ENCODE measurements at regions of chr15 and their contacts with region 1.

Region 1: DNA sequence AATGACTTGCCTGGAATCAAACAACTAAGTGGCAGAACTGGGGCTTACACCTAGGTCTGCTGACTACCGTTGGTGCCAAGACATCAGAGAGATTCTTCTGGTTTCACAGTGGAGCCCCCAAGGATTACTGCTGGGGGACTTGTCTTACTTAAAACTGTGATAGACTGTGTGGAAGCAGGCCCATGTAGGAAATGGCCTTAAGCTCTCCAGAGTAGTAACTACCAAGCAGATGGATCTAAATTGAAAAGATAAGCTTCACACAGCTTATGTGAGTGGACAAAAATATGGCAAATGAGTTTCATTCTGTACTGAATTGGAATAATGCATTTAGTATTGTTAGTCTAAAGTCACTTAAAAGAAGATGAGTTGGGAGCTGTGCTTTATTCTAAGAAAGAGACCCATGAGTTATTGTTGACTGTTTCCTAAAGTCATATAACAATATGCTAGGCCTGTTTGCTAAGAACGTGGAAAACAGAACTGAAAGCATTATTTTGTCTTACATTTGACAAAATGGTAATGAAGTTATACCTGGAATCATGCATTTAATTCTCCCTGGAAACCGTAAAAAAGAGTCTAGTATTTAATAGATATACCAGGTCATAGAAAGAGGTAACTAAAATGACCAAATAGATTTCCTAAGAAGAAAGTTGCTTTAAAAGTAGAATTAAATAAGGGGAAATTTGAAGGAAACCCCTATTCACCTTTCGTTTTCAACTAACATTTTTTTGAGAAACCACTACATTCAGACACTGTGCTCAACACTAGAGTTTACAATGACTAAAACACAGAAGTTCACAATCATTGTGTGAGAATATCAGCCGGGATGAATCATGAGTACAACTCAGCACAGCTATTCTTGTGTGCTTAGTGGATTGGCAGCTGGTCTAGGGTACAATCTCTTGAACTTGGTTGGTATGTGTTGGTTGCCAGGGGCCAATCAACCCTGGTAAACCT is 13.0 kb upstream of the MAPK6 start:
- DNase-seq: peak; percentile 58
- H3K4me3 Mint-ChIP-seq: no peak overlapping the region
- H3K27ac Mint-ChIP-seq: peak overlapping the region; percentile 30
- H3K4me1 Mint-ChIP-seq: peaks cover 50% of the 10 kb centered on the region
- H3K27me3 Mint-ChIP-seq: peaks cover 6% of the 10 kb centered on the region

Region 2: DNA sequence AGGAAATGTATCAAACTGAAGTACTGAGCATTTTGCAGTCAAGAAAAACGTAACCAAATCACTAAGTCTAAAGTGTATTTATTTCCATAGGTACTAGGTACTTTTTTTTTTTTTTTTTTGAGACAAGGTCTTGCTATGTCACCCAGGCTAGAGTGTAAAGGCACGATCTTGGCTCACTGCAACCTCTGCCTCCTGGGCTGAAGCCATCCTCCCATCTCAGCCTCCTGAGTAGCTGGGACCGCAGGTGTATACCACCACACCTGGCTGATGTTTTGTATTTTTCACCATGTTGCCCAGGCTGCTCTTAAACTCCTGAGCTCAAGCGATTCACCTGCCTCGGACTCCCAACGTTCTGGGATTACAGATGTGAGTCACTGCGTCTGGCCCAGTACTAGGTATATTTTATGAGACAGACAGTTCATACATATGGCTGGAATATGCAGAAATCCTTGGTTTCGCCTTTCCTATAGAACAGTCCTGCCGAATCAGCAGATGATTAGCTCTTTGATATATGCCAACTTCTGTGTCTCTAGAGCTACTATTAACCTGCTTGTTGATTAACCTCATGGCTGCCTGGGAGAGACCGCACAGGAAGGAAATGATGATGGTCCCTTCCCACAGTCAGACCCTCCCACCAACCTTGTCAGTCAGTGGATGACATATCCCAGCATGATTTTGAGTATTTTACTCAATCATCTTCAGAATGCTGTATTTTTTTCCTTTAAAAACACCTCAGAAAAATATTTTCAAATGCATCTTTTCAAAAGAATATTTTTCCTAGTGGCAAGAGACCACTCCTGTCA is 144.3 kb before region 1 on chr15:
- CTCF ChIA-PET with region 1: no interaction called
- intact Hi-C with region 1: loop called (anchors 5 kb)
- DNase-seq: peak; percentile 79
- H3K4me3 Mint-ChIP-seq: no peak overlapping the region
- H3K27ac Mint-ChIP-seq: peak overlapping the region; percentile 47
- H3K4me1 Mint-ChIP-seq: peaks cover 68% of the 10 kb centered on the region
- H3K27me3 Mint-ChIP-seq: no peaks in the 10 kb centered on the region

Region 3: DNA sequence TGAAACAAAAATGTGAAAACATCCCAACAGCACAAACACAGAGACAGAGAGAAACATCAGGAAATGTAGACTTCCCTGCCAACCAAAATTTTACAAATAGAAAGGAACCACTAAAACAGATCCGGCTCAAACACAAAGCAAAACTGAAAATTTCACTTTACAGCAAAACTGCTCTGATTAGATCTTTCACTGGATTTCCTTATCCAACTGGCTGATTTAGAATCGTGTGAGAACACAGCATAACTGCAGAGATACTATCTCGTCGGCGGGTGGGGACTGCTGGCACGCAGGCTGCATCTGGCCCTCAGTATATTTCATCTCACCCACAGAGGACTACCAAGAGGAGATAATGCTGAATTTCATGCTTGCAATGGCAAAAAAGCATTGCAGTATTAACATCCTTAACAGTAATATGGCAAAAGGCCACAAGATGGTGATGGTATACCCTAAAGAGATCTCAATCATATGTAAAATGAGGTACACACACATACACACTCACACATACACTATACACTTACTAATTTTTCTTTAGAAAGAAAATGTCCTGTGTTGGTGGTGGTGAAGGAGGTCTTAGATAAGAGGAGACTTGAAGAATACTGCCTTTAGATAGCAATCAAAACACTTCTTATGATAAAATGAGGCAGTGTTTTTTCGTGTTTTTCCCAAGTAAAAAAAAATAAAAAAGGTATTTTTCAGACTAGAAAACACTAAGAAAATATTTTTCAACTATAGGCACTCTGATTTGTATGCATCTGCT is 23.8 kb before region 1 on chr15:
- CTCF ChIA-PET with region 1: no interaction called
- intact Hi-C with region 1: loop called (anchors 1 kb)
- DNase-seq: peak; percentile 52
- H3K4me3 Mint-ChIP-seq: peak overlapping the region; percentile 62
- H3K27ac Mint-ChIP-seq: peak overlapping the region; percentile 25
- H3K4me1 Mint-ChIP-seq: peaks cover 10% of the 10 kb centered on the region
- H3K27me3 Mint-ChIP-seq: no peaks in the 10 kb centered on the region

Region 4: DNA sequence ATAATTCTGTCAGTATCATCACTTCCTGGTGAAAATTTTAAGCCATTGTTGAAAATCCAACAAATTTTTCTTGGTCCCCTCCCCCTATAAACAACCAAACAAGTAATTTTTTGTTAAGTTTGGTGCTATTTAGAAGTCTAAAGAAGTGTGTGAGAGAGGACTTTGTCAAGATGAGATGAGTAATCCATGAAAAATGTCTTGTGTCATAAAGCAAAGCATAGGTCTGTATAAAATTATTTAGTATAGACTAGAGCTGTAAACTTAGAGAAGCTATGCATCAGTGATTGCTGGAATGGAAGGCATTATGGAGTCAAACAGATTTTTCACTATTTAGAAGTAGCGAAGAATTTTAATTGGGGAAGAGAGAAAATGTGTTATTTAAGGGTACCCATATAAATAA is 44.4 kb after region 1 on chr15:
- CTCF ChIA-PET with region 1: interaction called, 5 read pairs
- intact Hi-C with region 1: loop called (anchors 1 kb)
- DNase-seq: no peak
- H3K4me3 Mint-ChIP-seq: no peak overlapping the region
- H3K27ac Mint-ChIP-seq: no peak overlapping the region
- H3K4me1 Mint-ChIP-seq: peaks cover 15% of the 10 kb centered on the region
- H3K27me3 Mint-ChIP-seq: no peaks in the 10 kb centered on the region

Region 5: DNA sequence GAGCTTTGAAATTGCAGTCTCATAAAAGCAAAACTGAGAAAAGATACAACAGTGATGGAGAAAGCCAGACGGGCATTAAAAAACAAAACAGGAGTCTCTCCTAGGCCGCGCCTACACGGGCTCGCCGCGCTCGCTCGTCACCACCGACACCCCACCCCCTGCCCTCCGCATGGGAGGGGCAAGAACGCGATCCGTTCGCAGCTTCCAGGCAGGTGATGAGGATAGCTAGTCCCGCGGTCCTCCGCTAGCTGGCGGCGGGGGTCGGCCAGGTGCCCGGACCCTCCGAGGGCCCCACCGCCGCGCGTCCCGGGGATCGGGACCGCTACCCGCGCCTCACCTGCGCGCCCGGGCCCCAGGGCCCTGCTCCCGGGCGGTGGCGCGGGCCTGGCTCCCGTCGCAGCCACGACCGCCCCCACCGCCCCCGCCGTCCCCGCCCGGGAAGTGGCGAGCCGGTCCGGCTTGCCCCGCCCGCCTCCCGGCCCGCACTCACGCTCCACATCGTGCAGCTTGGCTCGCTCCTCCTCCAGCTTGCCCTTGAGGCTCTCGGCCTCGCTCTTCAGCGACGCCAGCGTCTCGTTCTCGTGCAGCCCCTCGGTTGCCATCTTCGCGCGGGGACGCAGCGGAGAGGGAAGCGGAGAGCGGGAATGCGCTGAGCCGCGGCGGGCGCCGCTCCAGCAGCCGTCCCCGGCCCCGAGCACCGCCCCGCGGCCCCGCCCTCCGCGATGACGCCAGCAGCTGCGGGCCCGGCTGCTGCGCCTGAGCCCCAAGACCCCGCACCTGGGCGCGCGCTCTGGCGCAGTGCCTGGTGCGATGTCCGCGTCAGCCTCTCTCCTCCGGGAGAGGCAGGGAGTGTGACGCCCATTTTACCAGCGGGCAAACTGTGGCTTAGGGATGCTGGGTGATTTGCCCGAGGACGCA is 173.5 kb after region 1 on chr15:
- CTCF ChIA-PET with region 1: no interaction called
- intact Hi-C with region 1: loop called (anchors 2 kb)
- DNase-seq: peak; percentile 91
- H3K4me3 Mint-ChIP-seq: peak overlapping the region; percentile 87
- H3K27ac Mint-ChIP-seq: peak overlapping the region; percentile 92
- H3K4me1 Mint-ChIP-seq: peaks cover 19% of the 10 kb centered on the region
- H3K27me3 Mint-ChIP-seq: no peaks in the 10 kb centered on the region

Measured in activated naive CD4-positive, alpha-beta T cell treated with anti-CD3 and anti-CD28 coated beads for 36 hours (primary cell).